ENCODE measurements at regions of chr7 and their contacts with region 1.

Region 1: GRCh38 chr7:117715784-117716445 is 157.3 kb downstream of the CTTNBP2 start:
- DNase-seq: no peak
- ATAC-seq: peak in 1 of 8 donors; percentile 67
- H3K4me3 ChIP-seq: no peak overlapping the region
- H3K27ac ChIP-seq: no peak overlapping the region
- H3K4me1 ChIP-seq: no peaks in the 10 kb centered on the region
- H3K27me3 ChIP-seq: no peaks in the 10 kb centered on the region
- CTCF ChIP-seq: peak in 8 of 9 donors; percentile 8 to 52 (median 48)

Region 2: GRCh38 chr7:117399820-117400422 is 316.0 kb before region 1 on chr7:
- intact Hi-C with region 1: loop called in 1 of 10 experiments (anchors 2 kb)
- DNase-seq: no peak
- ATAC-seq: no peak
- H3K4me3 ChIP-seq: no peak overlapping the region
- H3K27ac ChIP-seq: no peak overlapping the region
- H3K4me1 ChIP-seq: no peaks in the 10 kb centered on the region
- H3K27me3 ChIP-seq: no peaks in the 10 kb centered on the region
- CTCF ChIP-seq: peak in 7 of 9 donors; percentile 32 to 53 (median 40)